ENCODE measurements at regions of chr12 and their contacts with region 1.

Region 1: GRCh38 chr12:7108796-7109571 is at the start of gene C1RL:
- DNase-seq: peak; percentile 63 to 73 (median 69)
- H3K4me3 ChIP-seq: peak within 1 kb of the TSS; percentile 54 to 94
- H3K4me3 Mint-ChIP-seq: peak within 1 kb of the TSS; percentile 93 to 96 (median 94)
- H3K27ac ChIP-seq: peak within 1 kb of the TSS; percentile 74
- H3K27ac Mint-ChIP-seq: peak within 1 kb of the TSS; percentile 91 to 97 (median 95)
- H3K4me1 ChIP-seq: peaks cover 38% of the 10 kb centered on the region
- H3K4me1 Mint-ChIP-seq: peaks cover 22 to 53% (median 40%) of the 10 kb centered on the region in 4 donors
- H3K27me3 ChIP-seq: no peaks in the 10 kb centered on the region
- H3K27me3 Mint-ChIP-seq: no peaks in the 10 kb centered on the region
- total RNA-seq, gene C1RL: 30.7 to 33.6 TPM

Region 2: DNA sequence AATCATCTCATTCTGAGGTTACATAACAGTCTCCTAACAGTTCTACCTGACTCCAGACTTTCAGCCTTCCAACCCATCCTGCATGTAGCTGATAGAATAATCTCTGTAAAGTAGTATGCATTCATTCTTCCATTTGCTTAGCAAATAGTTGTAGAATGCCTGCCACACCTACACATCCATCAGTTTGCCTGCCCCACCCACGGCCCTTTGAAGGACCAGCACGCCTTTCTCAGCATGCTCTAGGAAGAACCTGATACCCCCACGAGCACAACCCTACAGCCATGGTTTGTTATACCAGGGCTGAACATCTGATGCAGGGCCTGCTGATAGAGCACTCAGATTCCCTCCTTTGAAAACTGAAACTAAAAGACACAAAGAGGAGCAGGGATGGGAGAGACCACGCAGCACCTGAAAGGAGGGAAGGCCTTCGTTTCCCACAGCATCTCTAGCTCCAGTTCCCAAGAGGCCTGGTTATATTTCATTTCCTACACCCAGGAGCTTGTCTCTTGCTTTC is 1369.1 kb before region 1 on chr12:
- CTCF ChIA-PET with region 1: no interaction called
- POLR2A ChIA-PET with region 1: no interaction called
- intact Hi-C with region 1: no loop called
- DNase-seq: no peak
- H3K4me3 ChIP-seq: no peak overlapping the region
- H3K4me3 Mint-ChIP-seq: peak overlapping the region in 1 of 8 donors; percentile 4
- H3K27ac ChIP-seq: no peak overlapping the region
- H3K27ac Mint-ChIP-seq: no peak overlapping the region
- H3K4me1 ChIP-seq: no peaks in the 10 kb centered on the region
- H3K4me1 Mint-ChIP-seq: no peaks in the 10 kb centered on the region
- H3K27me3 ChIP-seq: no peaks in the 10 kb centered on the region
- H3K27me3 Mint-ChIP-seq: peaks cover 0 to 22% of the 10 kb centered on the region in 2 donors

Region 3: GRCh38 chr12:6904280-6905278 is 204.4 kb before region 1 on chr12 and contains the start of gene LRRC23:
- CTCF ChIA-PET with region 1: interaction called, 3 read pairs
- POLR2A ChIA-PET with region 1: interaction called, 10 read pairs
- intact Hi-C with region 1: no loop called
- DNase-seq: peak; percentile 97 to 99 (median 98)
- H3K4me3 ChIP-seq: peak within 1 kb of the TSS; percentile 74 to 95
- H3K4me3 Mint-ChIP-seq: no peak within 1 kb of the TSS
- H3K27ac ChIP-seq: peak within 1 kb of the TSS; percentile 86
- H3K27ac Mint-ChIP-seq: no peak within 1 kb of the TSS
- H3K4me1 ChIP-seq: peaks cover 19% of the 10 kb centered on the region
- H3K4me1 Mint-ChIP-seq: peaks cover 0 to 8% (median 6%) of the 10 kb centered on the region in 4 donors
- H3K27me3 ChIP-seq: no peaks in the 10 kb centered on the region
- H3K27me3 Mint-ChIP-seq: no peaks in the 10 kb centered on the region
- total RNA-seq, gene LRRC23: 8.3 to 9.1 TPM

Region 4: GRCh38 chr12:6927379-6928024 is 181.5 kb before region 1 on chr12 and contains the start of gene ATN1:
- CTCF ChIA-PET with region 1: interaction called, 50 read pairs
- POLR2A ChIA-PET with region 1: interaction called, 11 read pairs
- intact Hi-C with region 1: loop called (anchors 1 kb)
- DNase-seq: peak; percentile 37 to 65 (median 45)
- H3K4me3 ChIP-seq: peak within 1 kb of the TSS; percentile 57 to 65
- H3K4me3 Mint-ChIP-seq: peak within 1 kb of the TSS; percentile 88 to 94 (median 90)
- H3K27ac ChIP-seq: peak within 1 kb of the TSS; percentile 67
- H3K27ac Mint-ChIP-seq: peak within 1 kb of the TSS; percentile 91 to 97 (median 94)
- H3K4me1 ChIP-seq: peaks cover 43% of the 10 kb centered on the region
- H3K4me1 Mint-ChIP-seq: peaks cover 31 to 57% (median 43%) of the 10 kb centered on the region in 4 donors
- H3K27me3 ChIP-seq: no peaks in the 10 kb centered on the region
- H3K27me3 Mint-ChIP-seq: no peaks in the 10 kb centered on the region
- total RNA-seq, gene ATN1: 32.2 to 33.0 TPM

Region 5: GRCh38 chr12:6953442-6954315 is 155.3 kb before region 1 on chr12:
- CTCF ChIA-PET with region 1: interaction called, 7 read pairs
- POLR2A ChIA-PET with region 1: interaction called, 27 read pairs
- intact Hi-C with region 1: no loop called
- DNase-seq: peak; percentile 72 to 95 (median 78)
- H3K4me3 ChIP-seq: peak overlapping the region; percentile 81 to 82
- H3K4me3 Mint-ChIP-seq: peak overlapping the region; percentile 94 to 100 (median 98)
- H3K27ac ChIP-seq: peak overlapping the region; percentile 96
- H3K27ac Mint-ChIP-seq: peak overlapping the region; percentile 89 to 98 (median 96)
- H3K4me1 ChIP-seq: peaks cover 81% of the 10 kb centered on the region
- H3K4me1 Mint-ChIP-seq: peaks cover 62 to 97% (median 66%) of the 10 kb centered on the region in 4 donors
- H3K27me3 ChIP-seq: no peaks in the 10 kb centered on the region
- H3K27me3 Mint-ChIP-seq: peaks cover 0 to 3% of the 10 kb centered on the region in 2 donors

Region 6: DNA sequence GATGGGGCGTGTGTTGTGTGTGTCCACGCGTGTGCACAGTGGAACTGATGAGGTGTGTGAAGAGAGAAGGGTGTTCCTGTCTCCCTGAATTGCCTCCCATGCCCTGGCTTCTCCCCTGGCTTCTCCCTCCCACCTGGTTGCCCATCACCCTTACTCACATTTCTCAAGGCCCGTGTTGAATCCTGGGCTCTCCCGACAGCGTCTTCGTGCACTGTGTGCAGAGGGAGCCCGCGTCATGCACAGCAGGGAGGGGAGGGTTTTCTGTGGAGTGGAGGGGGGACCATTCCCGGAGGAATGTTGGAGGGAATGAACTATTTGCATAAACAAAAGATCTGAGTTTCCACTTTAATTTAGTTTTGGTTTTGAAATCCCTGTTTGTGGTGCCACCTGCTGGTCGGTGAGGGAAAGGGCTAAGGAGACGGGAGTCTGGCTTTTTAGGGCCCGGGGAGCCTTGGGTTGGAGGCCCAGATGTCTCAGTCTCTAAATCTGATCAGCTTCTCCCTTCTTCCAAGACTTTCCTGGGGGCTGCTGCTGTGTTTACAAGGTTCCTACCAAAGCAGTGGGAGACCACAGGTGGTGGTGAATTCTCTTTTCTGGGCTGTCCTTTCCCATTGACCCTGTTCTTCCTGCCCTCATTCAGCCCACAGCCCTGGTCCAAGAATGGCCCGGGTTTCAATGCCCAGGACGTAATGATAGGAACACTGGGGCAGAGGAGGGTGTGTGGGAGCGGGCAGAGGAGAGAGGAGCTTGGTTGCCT is 16.6 kb before region 1 on chr12 and contains the start of gene C1R:
- CTCF ChIA-PET with region 1: interaction called, 29 read pairs
- POLR2A ChIA-PET with region 1: interaction called, 13 read pairs
- intact Hi-C with region 1: no loop called
- DNase-seq: peak; percentile 60 to 71 (median 63)
- H3K4me3 ChIP-seq: peak within 1 kb of the TSS in 1 of 2 donors; percentile 56
- H3K4me3 Mint-ChIP-seq: peak within 1 kb of the TSS; percentile 70 to 90 (median 86)
- H3K27ac ChIP-seq: peak within 1 kb of the TSS; percentile 44
- H3K27ac Mint-ChIP-seq: peak within 1 kb of the TSS in 5 of 7 donors; percentile 57 to 89 (median 84)
- H3K4me1 ChIP-seq: peaks cover 15% of the 10 kb centered on the region
- H3K4me1 Mint-ChIP-seq: peaks cover 6 to 12% (median 8%) of the 10 kb centered on the region in 4 donors
- H3K27me3 ChIP-seq: no peaks in the 10 kb centered on the region
- H3K27me3 Mint-ChIP-seq: no peaks in the 10 kb centered on the region
- total RNA-seq, gene C1R: 0.86 to 2.3 TPM

Region 7: DNA sequence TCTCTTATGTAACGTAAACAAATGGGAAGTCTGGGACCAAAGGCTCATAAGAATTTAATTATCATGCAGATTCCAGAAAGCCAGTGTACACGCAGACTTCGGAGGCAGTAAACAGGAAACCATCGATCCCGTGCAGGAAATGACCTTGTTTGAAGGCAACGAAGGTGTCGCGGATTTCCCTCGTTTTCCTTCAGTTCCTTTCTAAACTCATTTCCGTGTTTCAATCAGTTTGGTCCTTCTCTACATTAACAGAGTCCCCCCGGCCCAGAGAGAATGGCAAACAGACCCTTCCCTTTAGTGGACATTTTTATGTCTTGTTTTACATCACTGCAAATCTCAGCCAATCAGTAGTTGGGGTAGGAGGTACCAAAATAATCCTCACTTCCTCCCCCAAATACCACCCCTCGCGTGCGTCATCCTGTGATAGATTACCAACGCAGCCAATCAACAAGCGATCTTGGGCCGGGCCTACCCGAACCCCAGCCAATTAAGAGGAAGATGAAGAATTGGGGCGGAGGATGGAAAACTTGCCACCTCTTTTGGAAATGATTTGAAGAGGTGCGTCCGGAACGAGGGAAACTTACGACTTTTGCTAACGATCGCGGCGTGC is 917.4 kb after region 1 on chr12:
- CTCF ChIA-PET with region 1: no interaction called
- POLR2A ChIA-PET with region 1: no interaction called
- intact Hi-C with region 1: no loop called
- DNase-seq: peak; percentile 97 to 99 (median 98)
- H3K4me3 ChIP-seq: peak overlapping the region; percentile 89 to 94
- H3K4me3 Mint-ChIP-seq: peak overlapping the region; percentile 90 to 99 (median 96)
- H3K27ac ChIP-seq: peak overlapping the region; percentile 99
- H3K27ac Mint-ChIP-seq: peak overlapping the region; percentile 96 to 100 (median 100)
- H3K4me1 ChIP-seq: peaks cover 14% of the 10 kb centered on the region
- H3K4me1 Mint-ChIP-seq: peaks cover 10 to 20% (median 15%) of the 10 kb centered on the region in 4 donors
- H3K27me3 ChIP-seq: no peaks in the 10 kb centered on the region
- H3K27me3 Mint-ChIP-seq: no peaks in the 10 kb centered on the region

Measured in CD4-positive, alpha-beta memory T cell (primary cell).